ENCODE measurements at regions of chr2 and their contacts with region 1.

Region 1: GRCh38 chr2:157413326-157414035 is 30.4 kb downstream of the CYTIP start:
- DNase-seq: peak; percentile 75
- H3K4me3 Mint-ChIP-seq: peak overlapping the region; percentile 65
- H3K27ac Mint-ChIP-seq: peak overlapping the region; percentile 98
- H3K4me1 Mint-ChIP-seq: peaks cover 81% of the 10 kb centered on the region
- H3K27me3 Mint-ChIP-seq: peaks cover 2% of the 10 kb centered on the region

Region 2: DNA sequence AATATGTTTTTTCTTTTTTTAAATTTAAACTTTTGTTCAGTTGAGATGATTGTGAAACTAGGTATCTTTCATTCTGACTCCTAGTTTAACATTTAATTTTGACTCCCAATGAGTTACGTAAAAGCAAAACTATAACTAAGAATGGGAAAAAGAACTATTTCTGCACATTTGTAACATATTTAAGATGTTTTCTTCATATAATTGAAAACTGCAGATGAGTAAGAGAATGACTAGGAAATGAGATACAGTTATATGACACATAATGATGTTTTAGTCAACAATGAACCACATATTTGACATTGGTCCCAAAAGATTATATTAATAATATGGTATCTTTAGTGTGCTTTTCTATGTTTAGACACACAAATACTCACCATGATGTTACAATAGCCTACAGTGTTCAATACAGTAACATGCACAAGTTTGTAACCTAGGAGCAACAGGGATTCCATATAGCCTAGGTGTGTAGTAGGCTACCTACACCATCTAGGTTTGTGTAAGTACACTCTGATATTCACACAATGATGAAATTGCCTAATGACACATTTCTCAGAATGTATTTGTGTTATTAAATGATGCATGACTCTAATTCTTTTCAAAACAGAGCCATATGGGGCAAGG is 100.5 kb before region 1 on chr2:
- CTCF ChIA-PET with region 1: no interaction called
- POLR2A ChIA-PET with region 1: no interaction called
- intact Hi-C with region 1: loop called (anchors 1 kb)
- DNase-seq: no peak
- H3K4me3 Mint-ChIP-seq: no peak overlapping the region
- H3K27ac Mint-ChIP-seq: no peak overlapping the region
- H3K4me1 Mint-ChIP-seq: peaks cover 34% of the 10 kb centered on the region
- H3K27me3 Mint-ChIP-seq: peaks cover 2% of the 10 kb centered on the region

Region 3: GRCh38 chr2:157363612-157364101 is 49.8 kb before region 1 on chr2:
- CTCF ChIA-PET with region 1: no interaction called
- POLR2A ChIA-PET with region 1: interaction called, 4 read pairs
- intact Hi-C with region 1: loop called (anchors 2 kb)
- DNase-seq: no peak
- H3K4me3 Mint-ChIP-seq: no peak overlapping the region
- H3K27ac Mint-ChIP-seq: peak overlapping the region; percentile 23
- H3K4me1 Mint-ChIP-seq: peaks cover 24% of the 10 kb centered on the region
- H3K27me3 Mint-ChIP-seq: no peaks in the 10 kb centered on the region

Region 4: DNA sequence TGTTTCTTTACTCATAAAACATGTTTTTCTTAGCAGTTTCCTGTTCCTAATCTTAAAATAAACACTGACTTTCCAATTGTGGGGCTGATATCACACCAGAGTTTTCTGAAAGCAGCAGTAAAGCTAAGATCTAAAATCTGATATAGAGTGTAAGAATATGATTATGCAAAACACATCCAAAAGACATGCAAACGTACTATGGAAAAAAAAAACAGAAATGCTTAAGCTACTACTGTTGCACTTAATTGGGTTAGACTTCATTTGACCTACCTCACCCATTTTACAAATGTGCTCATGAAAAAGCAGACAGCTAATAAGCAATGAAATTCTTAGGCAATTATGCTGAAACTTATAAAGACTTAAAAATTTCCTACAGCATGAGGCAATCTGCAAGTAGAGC is 19.9 kb after region 1 on chr2:
- CTCF ChIA-PET with region 1: interaction called, 5 read pairs
- POLR2A ChIA-PET with region 1: interaction called, 319 read pairs
- intact Hi-C with region 1: no loop called
- DNase-seq: no peak
- H3K4me3 Mint-ChIP-seq: peak overlapping the region; percentile 92
- H3K27ac Mint-ChIP-seq: peak overlapping the region; percentile 99
- H3K4me1 Mint-ChIP-seq: peaks cover 69% of the 10 kb centered on the region
- H3K27me3 Mint-ChIP-seq: no peaks in the 10 kb centered on the region

Region 5: DNA sequence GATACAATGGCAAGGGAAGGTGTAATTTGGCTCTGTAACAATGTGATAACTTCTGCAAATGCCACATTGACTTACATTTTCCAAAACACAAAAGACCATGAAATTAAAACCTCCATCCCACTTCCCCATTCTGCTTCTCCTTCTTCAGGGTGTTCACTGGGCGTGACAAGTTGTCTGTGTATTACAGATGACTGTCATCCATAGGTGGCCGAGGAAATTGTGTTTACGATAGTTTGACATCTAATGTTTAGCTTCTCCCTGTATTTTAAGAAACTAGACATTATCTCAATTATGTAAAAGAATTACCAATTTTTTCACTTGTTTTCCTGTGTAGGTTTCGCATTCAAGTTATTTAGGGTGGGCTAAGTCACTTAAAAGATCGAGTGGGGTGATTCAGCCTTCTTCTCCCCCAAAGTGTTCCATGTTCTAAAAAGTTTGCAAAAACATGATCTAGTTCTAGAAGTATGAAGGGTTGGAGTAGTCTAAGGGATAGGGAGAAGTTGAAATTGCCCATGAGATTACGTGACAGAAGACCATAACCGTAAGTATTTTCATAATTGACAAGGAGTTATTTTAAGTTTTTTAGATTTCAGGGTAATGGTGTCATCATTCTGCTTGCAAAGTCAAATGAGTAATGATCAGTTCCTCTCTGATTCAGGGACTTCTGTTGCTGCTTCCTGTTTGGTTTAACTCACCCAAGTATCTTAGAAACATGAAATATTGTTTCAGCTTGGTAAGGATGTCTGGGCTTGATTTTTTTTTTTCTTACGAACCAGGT is 55.6 kb after region 1 on chr2:
- CTCF ChIA-PET with region 1: interaction called, 3 read pairs
- POLR2A ChIA-PET with region 1: interaction called, 4 read pairs
- intact Hi-C with region 1: loop called (anchors 1 kb)
- DNase-seq: no peak
- H3K4me3 Mint-ChIP-seq: peak overlapping the region; percentile 69
- H3K27ac Mint-ChIP-seq: peak overlapping the region; percentile 99
- H3K4me1 Mint-ChIP-seq: peaks cover 91% of the 10 kb centered on the region
- H3K27me3 Mint-ChIP-seq: no peaks in the 10 kb centered on the region

Region 6: DNA sequence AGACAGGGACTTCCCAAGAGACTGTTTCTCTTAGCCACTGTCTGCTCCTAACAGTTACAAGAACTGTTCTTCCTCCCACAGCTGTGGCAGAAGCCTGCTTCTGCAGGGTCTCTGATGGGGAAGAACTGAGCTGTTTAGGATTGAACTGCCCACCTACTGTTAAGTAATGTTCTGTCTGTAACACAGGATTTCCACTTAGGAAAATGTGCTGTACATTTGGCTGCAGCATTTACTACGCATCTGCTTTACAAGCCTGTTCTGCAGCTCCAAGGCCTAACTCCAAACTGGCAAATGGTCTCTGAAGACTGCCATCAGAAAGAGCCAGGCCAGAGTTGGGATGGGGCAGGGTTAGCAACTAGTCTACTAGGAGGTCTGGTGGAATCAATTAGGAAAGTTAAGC is 600.4 kb after region 1 on chr2:
- CTCF ChIA-PET with region 1: no interaction called
- POLR2A ChIA-PET with region 1: no interaction called
- intact Hi-C with region 1: no loop called
- DNase-seq: no peak
- H3K4me3 Mint-ChIP-seq: no peak overlapping the region
- H3K27ac Mint-ChIP-seq: no peak overlapping the region
- H3K4me1 Mint-ChIP-seq: peaks cover 12% of the 10 kb centered on the region
- H3K27me3 Mint-ChIP-seq: peaks cover 2% of the 10 kb centered on the region